Tibial artery (tissue), 4 donors: ENCODE measurements at regions of chr7 and their contacts with region 1.

Region 1: GRCh38 chr7:55887821-55888247 is 578 bp downstream of the ZNF713 start:
- DNase-seq: no peak
- H3K4me3 ChIP-seq: peak overlapping the region; percentile 62 to 82
- H3K27ac ChIP-seq: peak overlapping the region; percentile 51 to 72
- H3K4me1 ChIP-seq: peaks cover 0 to 5% (median 2%) of the 10 kb centered on the region in 4 donors
- H3K27me3 ChIP-seq: no peaks in the 10 kb centered on the region
- CTCF ChIP-seq: no peak

Region 2: DNA sequence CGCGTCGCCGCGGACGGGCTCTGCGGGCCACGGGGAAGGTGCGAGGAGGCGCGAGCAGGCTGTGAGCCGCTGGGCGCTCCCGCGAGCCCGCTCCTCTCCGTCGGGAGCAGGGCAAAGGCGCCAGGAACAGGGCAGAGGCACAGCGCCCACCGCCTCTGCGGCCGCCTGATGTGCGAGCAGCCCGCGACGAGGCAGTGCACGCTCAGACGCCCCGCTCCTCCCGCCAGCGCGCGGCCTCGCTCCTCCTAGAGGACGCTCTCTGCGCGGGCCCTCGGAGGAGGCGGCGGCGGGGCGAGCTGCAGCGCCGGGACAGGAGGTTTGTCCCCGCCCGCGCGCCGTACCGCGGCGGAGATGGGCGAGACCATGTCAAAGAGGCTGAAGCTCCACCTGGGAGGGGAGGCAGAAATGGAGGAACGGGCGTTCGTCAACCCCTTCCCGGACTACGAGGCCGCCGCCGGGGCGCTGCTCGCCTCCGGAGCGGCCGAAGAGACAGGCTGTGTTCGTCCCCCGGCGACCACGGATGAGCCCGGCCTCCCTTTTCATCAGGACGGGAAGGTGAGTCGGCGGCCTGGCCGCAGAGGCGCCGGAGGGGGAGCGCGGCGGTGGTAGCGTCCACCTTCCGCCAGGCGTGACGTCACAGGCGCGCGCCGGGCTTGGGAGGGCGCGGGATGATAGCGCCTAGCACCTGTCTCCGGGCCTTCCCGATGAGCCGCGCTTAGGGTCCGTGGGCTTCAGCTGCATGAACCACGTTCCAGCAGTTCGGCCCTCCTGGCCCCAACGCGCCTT is 522.0 kb before region 1 on chr7:
- intact Hi-C with region 1: loop called (anchors 10 kb)
- DNase-seq: peak; percentile 93 to 96
- H3K4me3 ChIP-seq: peak overlapping the region; percentile 82 to 94
- H3K27ac ChIP-seq: peak overlapping the region; percentile 98 to 99
- H3K4me1 ChIP-seq: peaks cover 0 to 24% (median 15%) of the 10 kb centered on the region in 4 donors
- H3K27me3 ChIP-seq: peaks cover 0 to 6% of the 10 kb centered on the region in 2 donors
- CTCF ChIP-seq: peak; percentile 27

Region 3: GRCh38 chr7:55723621-55723941 is 164.3 kb before region 1 on chr7:
- intact Hi-C with region 1: no loop called
- DNase-seq: no peak
- H3K4me3 ChIP-seq: no peak overlapping the region
- H3K27ac ChIP-seq: no peak overlapping the region
- H3K4me1 ChIP-seq: peaks cover 0 to 3% (median 0%) of the 10 kb centered on the region in 4 donors
- H3K27me3 ChIP-seq: no peaks in the 10 kb centered on the region
- CTCF ChIP-seq: no peak

Region 4: DNA sequence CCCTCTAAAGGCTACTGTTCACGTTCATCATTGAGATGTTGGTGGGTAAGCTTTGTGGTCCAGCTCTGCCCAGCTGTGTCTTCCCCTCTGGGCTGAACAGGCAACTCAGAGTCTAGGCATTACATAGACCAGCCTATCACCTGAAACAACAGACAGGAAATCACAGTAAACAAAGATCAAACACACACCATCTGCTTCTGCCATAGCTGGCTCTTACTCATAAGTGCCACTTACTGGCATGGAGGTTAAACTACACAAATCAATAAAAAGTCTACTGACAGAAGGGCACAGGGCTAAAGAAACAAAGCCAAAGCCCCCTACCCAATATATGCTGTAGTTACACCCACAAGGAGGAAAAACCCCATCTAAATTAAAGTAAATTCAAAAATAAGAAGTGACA is 60.3 kb before region 1 on chr7:
- intact Hi-C with region 1: no loop called
- DNase-seq: no peak
- H3K4me3 ChIP-seq: no peak overlapping the region
- H3K27ac ChIP-seq: no peak overlapping the region
- H3K4me1 ChIP-seq: no peaks in the 10 kb centered on the region
- H3K27me3 ChIP-seq: no peaks in the 10 kb centered on the region
- CTCF ChIP-seq: no peak

Region 5: GRCh38 chr7:55964261-55965099 is 76.6 kb after region 1 on chr7 and contains the start of gene NIPSNAP2:
- intact Hi-C with region 1: loop called (anchors 10 kb)
- DNase-seq: peak; percentile 51 to 83
- H3K4me3 ChIP-seq: peak within 1 kb of the TSS; percentile 72 to 88
- H3K27ac ChIP-seq: peak within 1 kb of the TSS; percentile 94 to 97
- H3K4me1 ChIP-seq: peaks cover 0 to 29% (median 16%) of the 10 kb centered on the region in 4 donors
- H3K27me3 ChIP-seq: no peaks in the 10 kb centered on the region
- CTCF ChIP-seq: peak; percentile 21 to 93

Region 6: DNA sequence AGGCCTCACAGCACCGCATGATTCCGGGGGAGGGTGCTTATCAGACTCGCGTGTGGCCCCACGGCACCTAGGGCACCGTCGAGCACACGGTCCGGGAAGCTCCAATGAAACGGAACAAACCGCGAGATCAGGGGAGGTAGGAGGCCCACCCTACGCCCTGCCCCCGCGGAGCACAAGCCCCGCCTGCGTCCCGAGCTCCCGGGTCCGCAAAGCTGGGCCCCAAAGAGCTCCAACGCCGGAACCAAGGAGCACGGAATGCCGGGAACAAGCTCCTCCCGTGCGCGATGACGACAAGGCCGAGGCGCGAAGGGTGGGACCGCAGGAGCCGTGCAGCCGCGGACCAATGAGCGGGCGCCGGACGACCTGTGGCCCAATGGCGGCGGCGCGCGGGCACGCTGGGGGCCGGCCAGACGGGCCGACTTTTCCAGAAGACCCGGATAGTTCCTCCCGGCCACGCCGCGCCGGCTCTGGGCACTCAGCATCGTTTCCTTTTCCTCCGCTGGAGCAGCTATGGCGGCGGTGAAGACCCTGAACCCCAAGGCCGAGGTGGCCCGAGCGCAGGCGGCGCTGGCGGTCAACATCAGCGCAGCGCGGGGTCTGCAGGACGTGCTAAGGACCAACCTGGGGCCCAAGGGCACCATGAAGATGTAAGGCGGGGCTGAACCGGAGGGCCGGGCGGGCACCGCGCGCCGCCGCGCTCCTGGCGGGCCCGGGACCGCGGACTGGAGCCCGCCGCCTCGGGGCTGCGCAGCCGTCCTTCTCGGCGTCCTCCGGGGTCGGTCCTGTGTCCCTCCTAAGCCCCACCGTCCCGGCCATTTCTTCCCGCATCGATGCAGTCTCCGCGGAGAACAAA is 163.7 kb after region 1 on chr7 and contains the starts of genes CCT6A and PSPH:
- intact Hi-C with region 1: loop called (anchors 5 kb)
- DNase-seq: peak; percentile 97 to 99
- H3K4me3 ChIP-seq: peak within 1 kb of the TSS; percentile 81 to 87
- H3K27ac ChIP-seq: peak within 1 kb of the TSS; percentile 81 to 85
- H3K4me1 ChIP-seq: peaks cover 0 to 29% (median 14%) of the 10 kb centered on the region in 4 donors
- H3K27me3 ChIP-seq: no peaks in the 10 kb centered on the region
- CTCF ChIP-seq: no peak